Adrenal gland (tissue), 19 donors: ENCODE measurements at regions of chr5 and their contacts with region 1.

Region 1: GRCh38 chr5:133930061-133930812 is 38.2 kb downstream of the C5orf15 start:
- DNase-seq: peak; percentile 36 to 84 (median 64)
- H3K4me3 ChIP-seq: no peak overlapping the region
- H3K27ac ChIP-seq: peak overlapping the region in 1 of 5 donors; percentile 17
- H3K4me1 ChIP-seq: peaks cover 0 to 14% of the 10 kb centered on the region in 2 donors
- H3K27me3 ChIP-seq: no peaks in the 10 kb centered on the region
- CTCF ChIP-seq: no peak
- POLR2A ChIP-seq: no peak

Region 2: GRCh38 chr5:133552931-133553525 is 377.2 kb before region 1 on chr5:
- intact Hi-C with region 1: loop called in 1 of 2 experiments (anchors 10 kb)
- DNase-seq: peak; percentile 41 to 73 (median 66)
- H3K4me3 ChIP-seq: no peak overlapping the region
- H3K27ac ChIP-seq: no peak overlapping the region
- H3K4me1 ChIP-seq: no peaks in the 10 kb centered on the region
- H3K27me3 ChIP-seq: peaks cover 5% of the 10 kb centered on the region
- CTCF ChIP-seq: peak; percentile 48 to 78 (median 66)
- POLR2A ChIP-seq: no peak

Region 3: DNA sequence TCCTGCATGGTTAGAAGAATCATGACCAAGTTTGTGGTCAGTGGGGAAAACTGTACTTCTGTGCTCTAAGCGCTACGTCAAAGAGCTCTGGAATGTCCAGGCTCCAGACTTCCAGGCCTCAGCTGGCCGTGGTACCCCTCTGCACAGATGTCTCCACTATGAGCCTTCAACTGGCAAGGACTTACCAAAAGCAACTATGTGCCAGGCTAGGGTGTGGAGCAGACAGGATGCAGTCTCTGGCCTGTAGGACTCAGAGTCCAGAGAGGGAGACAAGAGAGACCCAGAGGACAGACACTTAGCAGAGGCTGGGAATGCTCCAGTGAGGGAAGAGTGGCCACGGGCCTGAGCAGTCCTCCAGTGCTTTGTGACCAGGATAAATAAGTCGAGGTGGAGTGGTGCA is 153.3 kb after region 1 on chr5:
- intact Hi-C with region 1: loop called in 1 of 2 experiments (anchors 5 kb)
- DNase-seq: no peak
- H3K4me3 ChIP-seq: no peak overlapping the region
- H3K27ac ChIP-seq: no peak overlapping the region
- H3K4me1 ChIP-seq: no peaks in the 10 kb centered on the region
- H3K27me3 ChIP-seq: no peaks in the 10 kb centered on the region
- CTCF ChIP-seq: no peak
- POLR2A ChIP-seq: no peak

Region 4: GRCh38 chr5:134555890-134556311 is 625.7 kb after region 1 on chr5:
- intact Hi-C with region 1: no loop called
- DNase-seq: peak; percentile 77 to 91 (median 88)
- H3K4me3 ChIP-seq: no peak overlapping the region
- H3K27ac ChIP-seq: peak overlapping the region; percentile 87 to 96 (median 90)
- H3K4me1 ChIP-seq: peaks cover 43 to 52% of the 10 kb centered on the region in 2 donors
- H3K27me3 ChIP-seq: no peaks in the 10 kb centered on the region
- CTCF ChIP-seq: no peak
- POLR2A ChIP-seq: no peak